ENCODE measurements at regions of chr17 and their contacts with region 1.

Region 1: GRCh38 chr17:47864770-47865216 is 13.8 kb upstream of the SP6 start:
- DNase-seq: no peak
- H3K4me3 Mint-ChIP-seq: no peak overlapping the region
- H3K27ac Mint-ChIP-seq: no peak overlapping the region
- H3K4me1 Mint-ChIP-seq: peaks cover 18% of the 10 kb centered on the region
- H3K27me3 Mint-ChIP-seq: peaks cover 12% of the 10 kb centered on the region

Region 2: DNA sequence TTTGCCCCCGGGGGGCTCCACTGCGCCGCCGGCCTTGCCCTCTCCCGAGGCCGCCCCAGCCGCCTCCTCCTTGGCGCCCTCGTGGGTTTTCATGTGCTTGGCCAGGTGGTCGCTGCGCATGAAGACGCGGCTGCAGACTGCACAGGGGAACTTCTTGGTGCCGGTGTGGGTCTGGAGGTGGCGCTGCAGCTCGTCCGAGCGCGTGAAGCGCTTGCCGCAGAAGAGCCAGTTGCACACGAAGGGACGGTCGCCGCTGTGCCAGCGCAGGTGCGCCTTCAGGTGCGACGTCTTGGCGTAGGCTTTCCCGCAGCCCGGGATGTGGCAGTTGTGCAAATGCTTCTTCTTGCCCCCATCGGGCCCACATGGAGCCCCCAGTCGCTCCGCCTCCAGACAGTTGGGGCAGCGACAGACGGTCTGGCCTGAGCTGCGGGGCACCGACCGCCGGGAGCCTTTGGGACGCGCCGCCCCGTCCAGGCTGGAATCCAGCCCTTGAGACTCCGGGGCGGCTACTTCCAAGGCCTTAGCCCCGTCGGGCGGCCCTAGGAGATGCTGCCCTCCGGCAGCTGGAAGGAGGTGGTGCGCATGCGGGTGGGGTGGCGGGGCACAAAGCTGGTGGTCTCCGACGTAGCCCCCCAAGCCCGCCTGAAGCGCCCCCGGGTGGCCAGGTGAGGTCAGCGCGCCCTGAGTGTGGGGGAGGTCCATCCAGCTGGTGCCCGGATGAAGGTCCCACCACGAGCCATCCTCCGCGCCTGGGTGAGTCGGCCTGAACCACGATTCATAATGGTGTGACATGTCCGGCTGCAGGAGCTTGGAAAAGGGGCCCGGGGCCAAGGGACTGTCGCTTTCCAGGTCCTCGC is 17.2 kb before region 1 on chr17:
- intact Hi-C with region 1: loop called (anchors 2 kb)
- DNase-seq: no peak
- H3K4me3 Mint-ChIP-seq: no peak overlapping the region
- H3K27ac Mint-ChIP-seq: no peak overlapping the region
- H3K4me1 Mint-ChIP-seq: peaks cover 21% of the 10 kb centered on the region
- H3K27me3 Mint-ChIP-seq: peaks cover 70% of the 10 kb centered on the region

Region 3: DNA sequence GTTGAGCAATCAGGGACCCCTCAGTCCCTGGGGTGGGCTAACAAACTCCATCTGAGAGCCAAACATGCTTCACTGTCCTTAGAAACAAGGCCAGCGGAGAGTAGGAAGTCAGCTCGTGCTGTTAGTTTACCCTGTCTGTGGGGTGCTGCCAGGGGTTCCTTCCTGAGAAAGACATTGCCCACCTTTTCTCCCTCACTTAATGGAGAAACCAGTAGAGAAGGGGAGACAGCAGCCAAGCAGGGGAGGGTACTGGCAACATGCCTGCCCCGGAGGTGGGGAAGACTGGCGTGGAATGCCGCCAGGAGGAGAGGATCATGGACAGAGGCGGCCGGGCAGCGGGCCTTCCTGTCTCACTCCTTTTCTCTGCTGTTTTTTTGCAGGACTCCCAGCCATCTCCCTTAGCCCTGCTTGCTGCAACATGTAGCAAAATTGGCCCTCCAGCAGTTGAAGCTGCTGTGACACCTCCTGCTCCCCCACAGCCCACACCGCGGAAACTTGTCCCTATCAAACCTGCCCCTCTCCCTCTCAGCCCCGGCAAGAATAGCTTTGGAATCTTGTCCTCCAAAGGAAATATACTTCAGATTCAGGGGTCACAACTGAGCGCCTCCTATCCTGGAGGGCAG is 51.1 kb after region 1 on chr17:
- intact Hi-C with region 1: no loop called
- DNase-seq: no peak
- H3K4me3 Mint-ChIP-seq: no peak overlapping the region
- H3K27ac Mint-ChIP-seq: no peak overlapping the region
- H3K4me1 Mint-ChIP-seq: peaks cover 7% of the 10 kb centered on the region
- H3K27me3 Mint-ChIP-seq: no peaks in the 10 kb centered on the region